Right lobe of liver (tissue), 6 donors: ENCODE measurements at regions of chr16 and their contacts with region 1.

Region 1: GRCh38 chr16:71412270-71413160 is 29.3 kb downstream of the TLE7 start:
- DNase-seq: peak; percentile 46 to 78 (median 63)
- ATAC-seq: peak; percentile 90 to 97 (median 93)
- H3K4me3 ChIP-seq: no peak overlapping the region
- H3K27ac ChIP-seq: no peak overlapping the region
- H3K4me1 ChIP-seq: no peaks in the 10 kb centered on the region
- H3K27me3 ChIP-seq: no peaks in the 10 kb centered on the region
- CTCF ChIP-seq: peak; percentile 86 to 91 (median 88)
- POLR2A ChIP-seq: no peak

Region 2: GRCh38 chr16:71264299-71264698 is 148.2 kb before region 1 on chr16:
- intact Hi-C with region 1: no loop called
- DNase-seq: no peak
- ATAC-seq: no peak
- H3K4me3 ChIP-seq: no peak overlapping the region
- H3K27ac ChIP-seq: no peak overlapping the region
- H3K4me1 ChIP-seq: peaks cover 0 to 4% (median 0%) of the 10 kb centered on the region in 4 donors
- H3K27me3 ChIP-seq: no peaks in the 10 kb centered on the region
- CTCF ChIP-seq: no peak
- POLR2A ChIP-seq: no peak

Region 3: DNA sequence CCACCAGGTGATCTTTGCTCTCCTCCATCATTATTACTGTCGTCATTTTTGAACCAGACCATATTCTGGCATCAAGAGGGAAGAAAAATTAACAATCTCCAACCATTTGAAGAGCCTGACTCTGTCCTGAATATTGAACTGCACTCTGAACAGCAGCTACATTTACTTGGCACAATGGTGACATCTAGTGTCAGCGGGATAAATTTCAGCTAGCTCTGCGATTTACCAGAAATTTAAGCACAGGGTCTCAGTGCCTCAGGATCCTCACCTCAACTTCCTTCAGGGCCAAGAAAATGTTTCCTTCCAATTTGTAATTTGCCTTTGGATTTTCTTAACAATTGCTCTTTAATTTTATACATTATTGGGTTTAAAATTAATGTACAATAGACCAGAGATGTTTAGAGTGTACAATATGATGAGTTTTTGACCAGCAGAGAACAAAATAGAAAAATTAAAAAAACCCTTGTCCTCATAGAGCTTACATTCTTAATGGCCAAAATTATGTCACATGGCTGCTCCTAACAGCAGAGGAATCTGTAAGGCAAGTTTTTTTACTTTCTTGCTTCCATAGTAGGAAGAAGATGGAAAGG is 87.4 kb after region 1 on chr16:
- intact Hi-C with region 1: loop called (anchors 5 to 10 kb)
- DNase-seq: no peak
- ATAC-seq: peak; percentile 88 to 92 (median 90)
- H3K4me3 ChIP-seq: no peak overlapping the region
- H3K27ac ChIP-seq: no peak overlapping the region
- H3K4me1 ChIP-seq: no peaks in the 10 kb centered on the region
- H3K27me3 ChIP-seq: no peaks in the 10 kb centered on the region
- CTCF ChIP-seq: peak; percentile 69 to 85 (median 76)
- POLR2A ChIP-seq: no peak

Region 4: DNA sequence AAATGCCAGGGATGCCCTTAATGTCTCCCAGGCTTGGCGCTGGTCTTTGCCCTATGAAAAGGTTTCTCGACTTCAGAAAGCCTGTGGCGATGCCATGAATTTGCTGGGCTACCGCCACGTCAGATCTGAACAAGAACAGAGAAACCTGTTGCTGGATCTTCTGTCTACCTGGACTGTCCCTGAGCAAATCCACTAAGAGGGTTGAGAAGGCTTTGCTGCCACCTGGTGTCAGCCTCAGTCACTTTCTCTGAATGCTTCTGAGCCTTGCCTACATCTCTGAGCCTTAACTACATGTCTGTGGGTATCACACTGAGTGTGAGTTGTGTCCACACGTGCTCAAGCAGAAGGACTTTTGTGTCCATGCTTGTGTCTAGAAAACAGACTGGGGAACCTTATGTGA is 125.1 kb after region 1 on chr16:
- intact Hi-C with region 1: loop called in 1 of 2 experiments (anchors 5 kb)
- DNase-seq: peak in 2 of 3 donors; percentile 55 to 69
- ATAC-seq: peak; percentile 89 to 96 (median 95)
- H3K4me3 ChIP-seq: no peak overlapping the region
- H3K27ac ChIP-seq: no peak overlapping the region
- H3K4me1 ChIP-seq: no peaks in the 10 kb centered on the region
- H3K27me3 ChIP-seq: no peaks in the 10 kb centered on the region
- CTCF ChIP-seq: peak; percentile 63 to 80 (median 78)
- POLR2A ChIP-seq: no peak

Region 5: GRCh38 chr16:71610936-71611871 is 198.7 kb after region 1 on chr16:
- intact Hi-C with region 1: loop called in 1 of 2 experiments (anchors 10 kb)
- DNase-seq: peak; percentile 83
- ATAC-seq: peak; percentile 97 to 99 (median 99)
- H3K4me3 ChIP-seq: peak overlapping the region in 1 of 3 donors; percentile 12
- H3K27ac ChIP-seq: peak overlapping the region in 1 of 3 donors; percentile 18
- H3K4me1 ChIP-seq: peaks cover 0 to 5% (median 0%) of the 10 kb centered on the region in 4 donors
- H3K27me3 ChIP-seq: no peaks in the 10 kb centered on the region
- CTCF ChIP-seq: peak; percentile 93 to 99 (median 96)
- POLR2A ChIP-seq: no peak